AG04450 (cell line): ENCODE measurements at regions of chr9 and their contacts with region 1.

Region 1: GRCh38 chr9:96361668-96362067 is 21.8 kb downstream of the SLC35D2 start:
- DNase-seq: no peak
- H3K4me3 ChIP-seq: no peak overlapping the region
- H3K27ac ChIP-seq: no peak overlapping the region
- H3K27me3 ChIP-seq: no peaks in the 10 kb centered on the region
- CTCF ChIP-seq: no peak

Region 2: DNA sequence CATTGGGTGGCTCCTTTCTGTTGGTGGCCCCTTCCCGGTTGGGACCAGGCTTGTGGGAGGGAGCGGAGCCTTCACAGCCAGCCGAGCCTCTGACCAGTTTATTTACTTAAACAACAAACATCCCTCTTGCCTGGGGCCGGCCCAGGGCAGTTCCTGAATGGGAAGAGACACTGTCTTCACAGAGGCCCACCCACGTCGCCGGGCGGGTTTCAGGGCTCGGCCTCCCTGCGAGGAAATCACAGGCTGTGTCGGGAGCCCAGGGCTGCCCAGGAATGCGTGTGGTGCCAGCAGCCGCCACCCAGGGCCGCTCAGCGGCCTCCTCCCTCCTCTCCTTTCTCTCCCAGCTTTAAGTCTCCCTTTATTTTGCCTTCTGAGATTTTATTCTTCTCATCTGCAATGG is 192.2 kb before region 1 on chr9:
- CTCF ChIA-PET with region 1: no interaction called
- POLR2A ChIA-PET with region 1: no interaction called
- DNase-seq: no peak
- H3K4me3 ChIP-seq: no peak overlapping the region
- H3K27ac ChIP-seq: no peak overlapping the region
- H3K27me3 ChIP-seq: peaks cover 33% of the 10 kb centered on the region
- CTCF ChIP-seq: no peak

Region 3: DNA sequence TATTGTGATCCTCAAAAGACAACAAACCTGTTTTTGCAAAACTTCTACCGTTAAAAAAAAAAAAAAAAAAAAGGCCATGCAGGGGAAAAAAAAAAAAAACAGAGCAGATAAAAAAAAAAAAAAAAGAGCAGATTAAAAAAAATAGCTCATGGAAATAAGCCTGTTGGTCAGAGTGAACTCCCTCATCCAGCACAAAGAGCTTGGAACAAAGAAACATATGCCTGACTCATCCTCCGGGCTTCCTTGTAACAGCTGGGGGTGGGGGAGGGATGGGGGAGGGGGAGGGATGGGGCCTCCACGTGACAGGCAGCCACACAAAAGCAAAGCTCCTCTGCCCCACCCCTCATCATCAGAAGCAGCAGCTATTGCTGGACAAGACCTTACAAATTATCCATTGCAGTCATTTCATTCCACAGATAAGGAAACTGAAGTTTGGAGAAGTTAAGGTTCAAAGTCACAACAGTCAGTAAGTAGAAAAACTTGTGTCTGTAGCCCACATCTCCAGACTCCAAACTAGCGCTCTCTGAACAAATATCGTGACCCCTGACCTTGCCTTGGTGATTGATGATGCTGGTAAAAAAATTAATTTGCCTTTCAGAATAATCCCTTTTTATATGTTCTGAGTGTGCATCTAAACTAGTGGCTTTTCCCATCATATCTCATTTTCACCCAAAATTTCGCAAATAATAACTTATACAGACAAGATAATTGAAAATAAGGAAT is 17.0 kb before region 1 on chr9:
- CTCF ChIA-PET with region 1: no interaction called
- POLR2A ChIA-PET with region 1: interaction called, 11 read pairs
- DNase-seq: peak; percentile 87
- H3K4me3 ChIP-seq: no peak overlapping the region
- H3K27ac ChIP-seq: no peak overlapping the region
- H3K27me3 ChIP-seq: no peaks in the 10 kb centered on the region
- CTCF ChIP-seq: no peak

Region 4: GRCh38 chr9:96417051-96417586 is 55.5 kb after region 1 on chr9:
- CTCF ChIA-PET with region 1: no interaction called
- POLR2A ChIA-PET with region 1: interaction called, 11 read pairs
- DNase-seq: peak; percentile 30
- H3K4me3 ChIP-seq: peak overlapping the region; percentile 95
- H3K27ac ChIP-seq: peak overlapping the region; percentile 33
- H3K27me3 ChIP-seq: no peaks in the 10 kb centered on the region
- CTCF ChIP-seq: peak; percentile 25

Region 5: DNA sequence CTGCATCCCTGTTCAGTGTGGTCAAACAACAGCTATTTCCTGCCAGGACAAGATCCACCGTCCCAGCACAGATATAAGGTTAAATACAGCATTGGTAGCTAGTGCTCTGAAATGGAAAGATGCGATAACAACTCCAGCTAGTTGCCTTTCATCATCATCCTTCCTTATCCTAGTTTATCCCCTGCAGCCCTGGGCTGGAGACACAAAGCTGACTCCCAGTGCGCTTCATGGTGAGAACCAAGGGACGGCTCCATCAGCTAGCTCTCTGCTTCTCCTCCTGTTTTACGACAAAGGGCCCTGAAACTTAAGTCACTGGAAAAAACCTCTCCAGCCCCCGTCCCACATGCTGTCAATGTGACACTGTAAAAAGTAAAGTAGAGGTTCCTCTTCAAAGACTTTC is 220.1 kb after region 1 on chr9:
- CTCF ChIA-PET with region 1: no interaction called
- POLR2A ChIA-PET with region 1: no interaction called
- DNase-seq: no peak
- H3K4me3 ChIP-seq: no peak overlapping the region
- H3K27ac ChIP-seq: no peak overlapping the region
- H3K27me3 ChIP-seq: no peaks in the 10 kb centered on the region
- CTCF ChIP-seq: no peak